AG04450 (cell line): ENCODE measurements at regions of chr2 and their contacts with region 1.

Region 1: GRCh38 chr2:229431327-229431954 is 160.4 kb upstream of the PID1 start:
- DNase-seq: no peak
- H3K4me3 ChIP-seq: no peak overlapping the region
- H3K27ac ChIP-seq: no peak overlapping the region
- H3K27me3 ChIP-seq: no peaks in the 10 kb centered on the region
- CTCF ChIP-seq: peak; percentile 63

Region 2: GRCh38 chr2:229387866-229388265 is 43.6 kb before region 1 on chr2:
- CTCF ChIA-PET with region 1: no interaction called
- POLR2A ChIA-PET with region 1: no interaction called
- DNase-seq: no peak
- H3K4me3 ChIP-seq: no peak overlapping the region
- H3K27ac ChIP-seq: no peak overlapping the region
- H3K27me3 ChIP-seq: no peaks in the 10 kb centered on the region
- CTCF ChIP-seq: no peak

Region 3: DNA sequence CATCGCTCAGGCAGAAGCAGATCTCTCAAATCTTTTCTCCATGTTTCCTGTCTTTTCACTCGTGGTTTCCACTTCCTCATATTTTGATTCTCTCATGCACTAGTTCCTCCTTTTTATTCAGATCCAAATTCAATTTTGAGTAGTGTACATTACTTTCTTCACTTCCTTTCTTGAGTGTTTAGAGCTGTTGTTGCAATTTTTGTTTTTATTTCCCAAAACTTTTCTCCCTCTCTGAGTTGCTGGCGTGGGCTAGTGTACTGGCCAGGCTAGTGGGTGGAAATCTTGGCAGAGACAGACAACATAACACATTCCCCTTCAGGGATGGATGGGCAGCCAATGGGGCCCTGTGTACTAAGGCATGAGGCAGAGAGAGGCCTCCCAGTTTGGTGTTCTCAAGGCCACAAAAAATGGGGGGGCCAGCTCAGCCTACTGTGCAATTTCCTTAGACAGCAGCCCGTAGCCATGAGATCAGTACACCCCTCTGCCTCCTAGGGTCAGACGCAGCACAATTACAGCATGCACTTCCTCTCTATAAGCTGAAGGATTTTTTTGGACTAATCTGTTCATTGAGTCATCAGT is 15.2 kb before region 1 on chr2:
- CTCF ChIA-PET with region 1: interaction called, 12 read pairs
- POLR2A ChIA-PET with region 1: no interaction called
- DNase-seq: no peak
- H3K4me3 ChIP-seq: no peak overlapping the region
- H3K27ac ChIP-seq: peak overlapping the region; percentile 1
- H3K27me3 ChIP-seq: no peaks in the 10 kb centered on the region
- CTCF ChIP-seq: no peak

Region 4: GRCh38 chr2:229445019-229445418 is 13.6 kb after region 1 on chr2:
- CTCF ChIA-PET with region 1: interaction called, 13 read pairs
- POLR2A ChIA-PET with region 1: interaction called, 3 read pairs
- DNase-seq: peak; percentile 82
- H3K4me3 ChIP-seq: 0 out of 2 replicates have a peak overlapping the region, but pooled peaks have one; percentile 15
- H3K27ac ChIP-seq: peak overlapping the region; percentile 87
- H3K27me3 ChIP-seq: no peaks in the 10 kb centered on the region
- CTCF ChIP-seq: no peak